ENCODE measurements at regions of chr4 and their contacts with region 1.

Region 1: DNA sequence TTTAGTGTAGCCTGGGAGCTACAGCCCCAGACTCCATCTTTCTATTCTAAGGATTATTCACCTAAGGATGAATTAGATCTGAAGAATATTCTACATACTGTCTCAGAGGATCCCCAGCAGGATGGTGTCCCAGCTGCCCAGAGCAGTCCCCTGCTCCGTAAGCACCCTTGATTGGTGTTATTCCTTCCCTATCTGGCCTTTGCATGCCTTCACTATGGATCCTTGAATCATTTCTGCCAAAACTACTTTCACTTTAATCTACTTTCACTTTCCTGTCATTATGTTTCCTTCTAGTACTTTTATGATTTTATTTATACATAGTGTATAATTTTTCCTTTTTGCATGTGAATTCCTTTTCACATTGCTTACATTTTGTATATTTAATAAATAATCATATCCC is 39.2 kb downstream of the ARHGAP24 start:
- DNase-seq: no peak
- H3K4me3 ChIP-seq: peak overlapping the region; percentile 10 to 56 (median 23)
- H3K27ac ChIP-seq: no peak overlapping the region
- H3K4me1 ChIP-seq: no peaks in the 10 kb centered on the region
- H3K27me3 ChIP-seq: no peaks in the 10 kb centered on the region
- CTCF ChIP-seq: no peak
- POLR2A ChIP-seq: no peak

Region 2: DNA sequence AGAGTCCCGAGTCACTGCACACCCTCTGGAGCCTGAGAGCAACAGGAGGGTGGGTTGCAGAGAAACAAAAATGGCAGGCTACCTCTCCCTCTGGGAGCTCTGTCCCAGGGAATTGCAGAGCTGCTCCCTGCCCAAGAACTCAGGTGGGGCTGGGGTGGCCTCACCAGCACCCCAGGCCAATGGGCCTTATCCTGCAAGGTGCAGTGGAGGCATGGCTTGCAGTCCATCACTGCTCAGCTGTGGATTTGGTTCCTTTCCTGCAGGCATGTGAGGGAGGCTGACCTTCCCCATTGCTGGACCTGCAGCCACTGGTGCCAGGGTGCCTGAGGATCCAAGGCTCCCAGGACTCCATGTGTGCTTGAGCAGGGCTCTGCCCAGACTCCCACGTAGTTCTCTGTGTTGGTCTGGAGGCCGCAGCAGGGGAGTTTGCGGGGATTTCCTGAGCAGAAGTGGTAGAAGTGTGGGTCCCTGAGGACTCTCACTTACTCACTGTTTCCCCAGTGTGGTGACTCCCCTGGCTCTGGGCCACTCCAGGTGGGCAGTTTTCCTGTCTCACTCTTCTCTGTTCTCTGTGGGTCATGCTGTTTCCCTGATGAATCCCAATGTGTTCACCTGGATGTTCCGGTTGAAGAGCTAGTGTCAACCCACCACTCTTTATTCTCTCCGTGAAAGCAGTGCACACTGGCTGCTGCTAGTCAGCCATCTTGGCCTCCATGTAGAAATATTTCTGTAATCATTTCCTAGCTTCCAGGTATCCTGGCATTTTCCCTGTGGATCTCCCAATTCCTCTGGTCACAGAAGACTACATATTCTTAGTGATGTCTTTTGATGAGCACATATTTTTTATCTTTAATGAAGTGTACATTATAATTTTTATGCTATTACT is 43.1 kb after region 1 on chr4:
- intact Hi-C with region 1: loop called (anchors 2 kb)
- DNase-seq: no peak
- H3K4me3 ChIP-seq: no peak overlapping the region
- H3K27ac ChIP-seq: no peak overlapping the region
- H3K4me1 ChIP-seq: no peaks in the 10 kb centered on the region
- H3K27me3 ChIP-seq: no peaks in the 10 kb centered on the region
- CTCF ChIP-seq: no peak
- POLR2A ChIP-seq: no peak

Region 3: GRCh38 chr4:85569730-85570299 is 55.7 kb after region 1 on chr4:
- intact Hi-C with region 1: loop called (anchors 2 kb)
- DNase-seq: no peak
- H3K4me3 ChIP-seq: no peak overlapping the region
- H3K27ac ChIP-seq: peak overlapping the region in 1 of 2 donors; percentile 58
- H3K4me1 ChIP-seq: no peaks in the 10 kb centered on the region
- H3K27me3 ChIP-seq: no peaks in the 10 kb centered on the region
- CTCF ChIP-seq: no peak
- POLR2A ChIP-seq: no peak